ENCODE measurements at regions of chr1 and their contacts with region 1.

Region 1: DNA sequence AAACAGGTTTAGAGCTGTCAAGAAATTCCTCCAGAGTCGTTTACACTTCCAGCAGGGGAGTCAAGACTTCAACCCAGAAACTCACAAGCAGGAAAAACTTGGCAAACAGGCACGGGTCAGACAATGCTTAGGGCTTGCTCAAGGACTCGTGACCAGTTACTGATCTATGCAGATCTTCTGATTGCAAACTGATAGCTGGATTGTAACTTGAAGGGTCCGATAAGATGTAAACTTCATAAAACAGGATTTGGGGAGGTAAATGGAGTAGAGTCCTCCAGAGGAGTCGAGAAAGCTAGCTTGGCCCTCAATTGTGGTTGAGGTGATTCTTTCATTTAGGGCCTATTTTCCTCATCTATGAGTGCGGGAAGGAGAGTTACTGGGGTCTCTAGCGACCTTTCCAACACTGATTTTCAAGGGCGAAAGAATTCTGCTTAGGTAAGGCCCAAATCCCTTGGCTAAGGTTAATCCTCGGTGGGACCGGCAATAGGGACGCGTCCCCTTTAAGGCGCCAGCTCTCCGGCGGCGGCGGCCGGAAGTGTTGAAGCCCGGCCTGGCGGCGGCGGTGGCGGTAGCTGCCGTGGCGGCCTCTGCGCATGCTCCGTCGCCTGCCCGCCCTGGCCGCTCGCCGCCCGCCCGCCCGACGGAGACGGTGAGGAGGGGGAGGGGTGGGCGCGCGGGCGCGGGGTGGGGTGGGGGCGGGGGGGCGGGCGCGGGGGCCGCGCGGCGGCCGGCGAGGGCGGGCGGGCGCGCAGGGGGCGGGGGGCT is at the start of gene GMEB1:
- DNase-seq: peak; percentile 90
- ATAC-seq: peak; percentile 88 to 92
- total RNA-seq, gene GMEB1: 6.1 to 6.2 TPM

Region 2: DNA sequence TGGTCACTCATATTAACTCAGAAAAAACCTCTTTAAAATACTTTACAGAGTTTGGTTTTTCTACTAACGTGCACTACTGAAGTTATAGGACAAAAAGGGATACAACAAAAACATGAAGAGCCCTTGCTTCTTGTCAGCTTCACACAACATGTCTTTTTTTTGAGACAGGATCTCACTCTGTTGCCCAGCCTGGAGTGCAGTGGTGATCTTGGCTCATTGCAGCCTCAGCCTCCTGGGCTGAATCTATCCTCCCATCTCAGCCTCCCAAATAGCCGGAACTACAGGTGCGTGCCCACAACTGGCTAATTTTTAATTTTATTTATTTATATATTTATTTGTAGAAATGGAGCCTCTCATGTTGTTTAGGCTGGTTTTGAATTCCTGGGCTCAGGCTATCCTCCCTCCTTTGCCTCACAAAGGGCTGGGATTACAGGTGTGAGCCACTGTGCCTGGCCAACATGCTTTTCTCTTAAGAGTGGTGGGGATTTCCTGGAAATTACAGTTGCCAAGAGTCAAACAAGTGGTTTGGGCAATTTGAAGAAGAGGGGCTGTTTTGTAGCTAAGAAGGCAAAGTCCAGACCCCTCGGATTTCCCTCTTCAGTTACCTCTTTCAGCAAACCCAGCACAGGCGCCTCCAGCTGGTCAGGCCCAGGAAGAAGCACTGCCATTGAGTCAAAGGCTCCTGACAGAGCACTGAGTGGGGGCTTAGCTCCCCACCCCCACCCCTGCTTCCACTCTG is 740.0 kb before region 1 on chr1:
- intact Hi-C with region 1: no loop called
- DNase-seq: no peak
- ATAC-seq: no peak

Region 3: DNA sequence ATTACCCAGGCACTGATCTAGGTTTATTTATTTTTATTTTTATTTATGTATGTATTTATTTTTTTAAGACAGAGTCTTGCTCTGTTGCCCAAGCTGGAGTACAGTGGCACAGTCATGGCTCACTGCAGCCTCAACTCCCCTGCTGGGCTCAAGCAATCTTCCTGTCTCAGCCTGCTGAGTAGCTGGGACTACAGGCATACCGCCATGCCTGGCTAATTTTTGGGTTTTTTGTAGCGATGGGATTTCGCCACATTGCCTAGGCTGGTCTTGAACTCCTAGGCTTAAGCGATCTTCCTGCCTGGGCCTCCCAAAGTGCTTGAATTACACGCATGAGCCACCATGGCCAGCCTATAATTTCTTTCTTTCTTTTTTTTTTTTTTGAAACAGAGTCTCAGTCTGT is 289.5 kb before region 1 on chr1:
- intact Hi-C with region 1: no loop called
- DNase-seq: no peak
- ATAC-seq: no peak

Region 4: DNA sequence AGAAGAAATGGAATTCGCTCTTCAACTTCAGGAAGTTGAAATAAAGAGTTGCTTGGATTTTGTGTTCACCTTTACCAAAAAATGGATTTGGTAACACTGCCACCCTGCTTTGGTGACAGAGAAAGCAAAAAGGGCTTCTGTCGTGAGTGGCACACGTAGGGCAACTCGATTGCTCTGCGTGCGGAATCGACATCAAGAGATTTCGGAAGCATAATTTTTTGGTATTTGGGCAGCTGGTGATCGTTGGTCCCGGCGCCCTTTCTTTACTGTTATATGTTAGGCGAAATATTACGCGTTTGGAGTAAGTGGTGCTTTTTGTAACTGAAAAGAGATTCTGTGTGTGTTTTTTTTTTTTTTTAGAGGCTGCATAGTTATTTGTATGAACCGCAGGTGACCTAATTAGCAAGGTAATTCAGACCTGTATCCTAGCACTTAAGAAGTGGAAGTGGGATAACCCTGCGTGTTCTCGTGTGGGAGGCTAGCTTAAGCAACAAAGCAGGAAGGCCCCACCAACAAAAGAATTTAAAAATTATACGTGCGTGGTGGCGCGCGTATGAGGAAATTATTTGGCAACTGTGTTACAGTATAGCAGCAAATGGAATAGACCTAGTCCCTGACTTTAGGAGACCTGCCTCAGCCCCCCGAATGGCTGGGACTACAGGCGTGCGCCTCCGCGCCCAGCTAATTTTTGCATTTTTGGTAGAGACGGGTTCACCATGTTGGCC is 19.7 kb before region 1 on chr1 and contains the start of gene RNU11:
- intact Hi-C with region 1: loop called in 1 of 2 experiments (anchors 2 kb)
- DNase-seq: peak; percentile 85
- ATAC-seq: peak; percentile 86 to 91
- total RNA-seq, gene RNU11: not detected

Region 5: DNA sequence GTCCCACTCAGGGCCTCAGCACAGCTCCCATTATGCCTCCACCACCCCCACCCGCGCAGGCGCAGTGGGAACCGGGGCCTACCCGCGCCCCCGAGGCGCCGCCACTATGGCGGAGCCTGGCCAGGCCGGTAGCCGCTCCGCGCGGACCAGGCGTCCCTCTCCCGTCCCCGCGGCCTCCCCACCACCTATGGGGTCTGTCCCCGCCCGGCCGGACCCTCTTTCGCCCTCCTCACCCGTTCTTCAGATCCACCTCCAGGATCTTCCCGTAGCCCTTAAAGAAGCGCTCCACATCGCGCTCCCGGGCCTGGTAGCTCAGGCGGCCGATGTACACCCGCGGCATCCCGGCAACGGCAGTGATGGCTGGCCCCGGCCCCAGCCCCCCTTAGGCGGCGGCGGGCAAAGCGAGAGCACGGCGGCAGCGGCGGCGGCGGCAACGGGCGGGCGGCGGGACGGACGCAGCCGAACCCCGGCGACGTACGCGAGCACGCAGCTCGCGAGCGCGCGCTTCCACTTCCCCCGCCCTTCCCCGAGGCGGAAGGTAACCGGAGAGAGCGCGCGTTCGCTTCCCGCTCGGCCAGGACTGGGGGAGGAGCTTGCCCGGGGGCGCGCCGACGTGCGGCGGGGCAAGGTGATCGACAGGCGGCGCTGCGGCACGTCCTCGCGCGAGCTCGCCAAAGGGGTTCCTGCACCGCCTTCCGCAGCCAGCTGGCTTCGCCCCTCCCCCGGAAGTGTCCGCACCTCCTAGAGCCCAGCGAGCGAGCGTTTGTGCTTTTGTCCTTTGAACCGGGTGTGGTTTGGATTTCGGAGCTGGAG is 513.2 kb after region 1 on chr1 and contains the start of gene SRSF4:
- intact Hi-C with region 1: loop called in 1 of 2 experiments (anchors 5 kb)
- DNase-seq: peak; percentile 100
- ATAC-seq: peak; percentile 96 to 97
- total RNA-seq, gene SRSF4: 50.1 to 63.9 TPM